ENCODE measurements at regions of chr16 and their contacts with region 1.

Region 1: GRCh38 chr16:2595393-2596205 is 57.8 kb downstream of the PDPK1 start:
- DNase-seq: no peak
- ATAC-seq: no peak
- H3K4me3 ChIP-seq: no peak overlapping the region
- H3K27ac ChIP-seq: no peak overlapping the region
- H3K4me1 ChIP-seq: peaks cover 0 to 8% of the 10 kb centered on the region in 2 experiments; a peak in 1 of 5 replicates
- H3K27me3 ChIP-seq: no peaks in the 10 kb centered on the region
- CTCF ChIP-seq: no peak
- EP300 ChIP-seq: no peak
- POLR2A ChIP-seq: no peak
- RAD21 ChIP-seq: no peak

Region 2: DNA sequence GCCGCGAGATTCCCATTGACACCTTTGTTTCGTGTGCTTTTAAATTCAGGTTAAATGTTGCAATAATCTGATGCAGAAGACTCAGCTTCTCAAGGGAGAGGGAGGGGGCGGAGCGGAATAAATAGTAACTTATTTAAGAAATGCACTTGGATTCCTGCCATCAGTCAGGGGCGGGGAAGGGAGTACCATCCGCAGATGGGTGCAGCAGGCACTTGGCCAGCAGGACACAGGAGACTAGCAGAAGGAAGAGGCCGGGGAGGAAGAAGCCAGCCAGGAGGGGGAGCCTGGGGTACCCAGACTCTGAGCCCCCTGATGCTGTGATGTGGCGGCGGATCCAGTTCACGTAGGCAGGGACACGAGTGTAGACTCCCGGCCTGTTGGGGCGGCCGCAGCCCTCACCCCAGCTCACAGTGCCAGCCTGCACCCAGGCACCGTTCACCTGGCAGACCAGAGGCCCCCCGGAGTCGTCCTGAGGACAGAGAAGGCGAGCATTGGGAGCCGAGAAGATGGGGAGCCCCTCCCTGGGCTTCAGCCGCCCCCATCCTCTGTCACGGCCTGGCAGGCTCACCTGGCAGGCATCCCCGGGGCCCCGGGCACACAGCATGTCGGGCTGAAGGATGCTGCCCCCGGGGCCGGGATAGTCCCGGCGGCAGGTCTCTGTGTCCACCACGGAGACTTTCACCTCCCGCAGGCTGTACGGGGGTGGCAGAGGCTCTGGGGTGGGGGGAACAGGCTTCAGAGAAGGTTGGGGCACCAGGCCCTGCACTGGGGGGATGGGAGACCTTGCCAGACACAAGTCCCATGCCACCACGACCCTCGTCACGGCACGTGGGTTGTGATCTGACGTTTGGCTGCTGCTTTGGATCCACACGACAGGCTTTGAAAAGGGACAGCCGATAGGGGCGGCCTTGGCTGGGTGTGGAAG is 1373.7 kb before region 1 on chr16:
- CTCF ChIA-PET with region 1: no interaction called
- POLR2A ChIA-PET with region 1: no interaction called
- in situ Hi-C with region 1: no loop called
- intact Hi-C with region 1: no loop called
- DNase-seq: peak in 1 of 4 experiments; percentile 39
- ATAC-seq: no peak
- H3K4me3 ChIP-seq: no peak overlapping the region
- H3K27ac ChIP-seq: no peak overlapping the region
- H3K4me1 ChIP-seq: peaks cover 0 to 65% of the 10 kb centered on the region in 2 experiments; a peak in 2 of 5 replicates
- H3K27me3 ChIP-seq: peaks cover 55 to 84% of the 10 kb centered on the region in 2 experiments
- CTCF ChIP-seq: no peak
- EP300 ChIP-seq: no peak
- POLR2A ChIP-seq: no peak
- RAD21 ChIP-seq: no peak

Region 3: DNA sequence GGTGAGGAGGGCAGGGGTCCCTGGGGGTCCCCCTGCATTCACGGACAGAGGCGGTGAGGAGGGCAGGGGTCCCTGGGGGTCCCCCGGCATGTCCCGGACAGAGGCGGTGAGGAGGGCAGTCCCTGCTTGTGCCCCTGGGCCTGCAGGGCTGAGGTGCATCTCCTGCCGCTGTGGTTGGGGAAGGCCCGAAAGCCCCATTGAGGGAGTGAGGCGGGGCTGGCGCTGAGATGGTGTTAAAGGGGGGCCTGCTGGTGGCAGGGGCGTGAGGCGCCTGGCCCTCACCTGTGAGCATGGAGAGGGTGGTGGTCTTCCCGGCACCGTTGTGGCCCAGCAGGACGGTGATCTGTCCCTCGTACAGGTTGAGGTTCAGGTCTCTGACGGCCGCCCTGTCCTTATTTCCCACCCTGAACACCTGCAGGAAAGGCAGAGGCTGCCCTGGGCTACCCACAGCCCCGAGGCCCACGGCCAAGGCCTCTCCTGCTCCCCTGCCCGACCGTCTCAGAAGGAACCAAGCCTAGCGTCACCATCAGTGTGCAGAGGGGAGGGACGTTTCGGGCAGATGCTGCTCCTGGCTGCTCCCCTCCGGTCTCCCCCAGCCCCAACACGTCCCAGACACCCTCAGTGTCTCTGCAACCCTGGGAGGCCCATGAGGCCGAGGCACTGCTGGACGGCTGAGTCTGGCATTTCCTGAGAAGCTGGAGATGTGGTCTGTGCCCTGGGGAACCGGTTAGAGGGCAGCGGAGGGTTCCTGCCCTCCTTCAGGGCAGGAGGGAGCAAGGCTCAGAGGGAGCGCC is 296.3 kb before region 1 on chr16:
- CTCF ChIA-PET with region 1: no interaction called
- POLR2A ChIA-PET with region 1: no interaction called
- in situ Hi-C with region 1: no loop called
- intact Hi-C with region 1: no loop called
- DNase-seq: no peak
- ATAC-seq: no peak
- H3K4me3 ChIP-seq: no peak overlapping the region
- H3K27ac ChIP-seq: no peak overlapping the region
- H3K4me1 ChIP-seq: peaks cover 6 to 24% of the 10 kb centered on the region in 2 experiments; a peak in 4 of 5 replicates
- H3K27me3 ChIP-seq: no peaks in the 10 kb centered on the region
- CTCF ChIP-seq: no peak
- EP300 ChIP-seq: no peak
- POLR2A ChIP-seq: no peak
- RAD21 ChIP-seq: no peak

Region 4: GRCh38 chr16:2675714-2676113 is 80.1 kb after region 1 on chr16:
- CTCF ChIA-PET with region 1: no interaction called
- POLR2A ChIA-PET with region 1: no interaction called
- in situ Hi-C with region 1: loop called (anchors 5 kb)
- intact Hi-C with region 1: no loop called
- DNase-seq: peak in 1 of 4 experiments; percentile 50
- ATAC-seq: no peak
- H3K4me3 ChIP-seq: no peak overlapping the region
- H3K27ac ChIP-seq: peak overlapping the region; percentile 36; the same call in 1 of the 3 replicates
- H3K4me1 ChIP-seq: peaks cover 10 to 16% of the 10 kb centered on the region in 2 experiments; a peak in 4 of 5 replicates
- H3K27me3 ChIP-seq: no peaks in the 10 kb centered on the region
- CTCF ChIP-seq: no peak
- EP300 ChIP-seq: no peak
- POLR2A ChIP-seq: no peak
- RAD21 ChIP-seq: no peak